ENCODE measurements at regions of chr5 and their contacts with region 1.

Region 1: GRCh38 chr5:143403593-143404415 is at the start of gene NR3C1:
- DNase-seq: peak; percentile 79 to 92 (median 89)
- ATAC-seq: peak; percentile 84
- H3K4me3 ChIP-seq: peak within 1 kb of the TSS; percentile 50
- H3K4me1 ChIP-seq: peaks cover 9% of the 10 kb centered on the region
- CTCF ChIP-seq: peak; percentile 67
- total RNA-seq, gene NR3C1: 25.6 to 59.0 (median 27.7) TPM

Region 2: DNA sequence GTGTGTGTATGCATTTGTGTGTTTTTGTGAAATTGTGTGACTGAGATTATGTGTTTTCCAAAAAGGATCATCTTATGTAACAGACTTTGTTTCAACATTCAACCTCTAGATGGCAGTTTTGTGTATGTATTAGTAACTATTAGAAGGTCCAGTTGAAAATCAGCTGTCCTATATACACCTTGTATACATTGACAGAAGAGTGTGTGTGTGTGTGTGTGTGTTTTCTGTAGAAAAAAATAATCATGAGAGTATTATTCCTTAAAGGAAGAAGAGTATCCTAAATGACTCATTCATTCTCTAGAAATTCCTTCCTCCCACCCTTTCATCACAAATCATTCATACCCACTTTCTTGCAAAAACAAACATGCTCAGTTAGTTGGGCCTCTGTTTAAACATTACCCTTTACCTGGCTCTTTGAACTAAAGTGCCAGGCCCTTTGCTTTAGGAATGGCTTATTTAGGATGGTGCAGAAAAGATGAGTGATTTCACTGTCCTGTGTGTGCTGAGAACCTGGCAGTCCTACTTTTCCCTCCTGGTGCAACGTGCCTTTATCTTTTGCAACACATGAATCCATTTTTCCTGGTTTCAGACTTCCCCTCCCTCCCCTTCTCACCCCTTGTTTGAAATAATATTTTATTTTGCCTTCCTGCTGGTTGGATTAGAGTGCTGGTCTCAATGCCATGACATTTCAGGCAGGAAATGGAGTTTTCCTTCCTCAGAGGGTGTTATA is 481.4 kb before region 1 on chr5:
- intact Hi-C with region 1: loop called in 1 of 2 experiments (anchors 10 kb)
- DNase-seq: no peak
- ATAC-seq: peak; percentile 39
- H3K4me3 ChIP-seq: no peak overlapping the region
- H3K4me1 ChIP-seq: no peaks in the 10 kb centered on the region
- CTCF ChIP-seq: no peak

Region 3: GRCh38 chr5:143824851-143825720 is 421.3 kb after region 1 on chr5:
- intact Hi-C with region 1: loop called in 1 of 2 experiments (anchors 10 kb)
- DNase-seq: peak; percentile 72 to 94 (median 83)
- ATAC-seq: peak; percentile 95
- H3K4me3 ChIP-seq: no peak overlapping the region
- H3K4me1 ChIP-seq: peaks cover 3% of the 10 kb centered on the region
- CTCF ChIP-seq: peak; percentile 91